Activated CD4-positive, alpha-beta memory T cell treated with anti-CD3 and anti-CD28 coated beads, Interleukin-2, amount 10 ng/mL, durations not matched to agents 7 days and 5 days (primary cell): ENCODE measurements at regions of chr11 and their contacts with region 1.

Region 1: DNA sequence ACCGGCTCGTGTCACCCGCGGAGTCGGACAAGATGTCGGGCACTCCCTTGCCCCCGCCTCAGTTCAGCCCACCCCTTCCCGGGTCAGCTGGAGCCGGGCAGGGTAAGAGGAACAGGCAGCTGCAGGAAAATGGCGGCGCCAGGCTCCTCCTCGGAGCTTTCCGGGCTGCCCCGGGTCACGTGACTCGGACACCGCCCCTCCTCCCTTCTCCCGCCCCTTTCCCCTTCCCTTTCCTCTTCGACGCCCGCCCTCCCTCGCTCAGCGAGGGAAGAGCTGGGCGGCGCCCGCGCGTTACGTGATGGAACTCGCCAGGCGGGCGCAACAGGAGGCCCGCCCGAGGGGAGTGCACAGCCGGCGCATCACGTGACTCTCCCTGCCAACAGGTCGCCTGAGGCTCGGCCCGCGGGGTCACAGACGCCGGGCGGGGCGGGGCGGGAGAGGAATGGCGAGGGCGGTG is at the start of gene PICALM:
- DNase-seq: peak; percentile 98
- H3K4me3 Mint-ChIP-seq: peak within 1 kb of the TSS; percentile 100
- H3K27ac Mint-ChIP-seq: peak within 1 kb of the TSS; percentile 88
- H3K4me1 Mint-ChIP-seq: peaks cover 26% of the 10 kb centered on the region
- H3K27me3 Mint-ChIP-seq: no peaks in the 10 kb centered on the region
- total RNA-seq, gene PICALM: 194 to 199 TPM

Region 2: DNA sequence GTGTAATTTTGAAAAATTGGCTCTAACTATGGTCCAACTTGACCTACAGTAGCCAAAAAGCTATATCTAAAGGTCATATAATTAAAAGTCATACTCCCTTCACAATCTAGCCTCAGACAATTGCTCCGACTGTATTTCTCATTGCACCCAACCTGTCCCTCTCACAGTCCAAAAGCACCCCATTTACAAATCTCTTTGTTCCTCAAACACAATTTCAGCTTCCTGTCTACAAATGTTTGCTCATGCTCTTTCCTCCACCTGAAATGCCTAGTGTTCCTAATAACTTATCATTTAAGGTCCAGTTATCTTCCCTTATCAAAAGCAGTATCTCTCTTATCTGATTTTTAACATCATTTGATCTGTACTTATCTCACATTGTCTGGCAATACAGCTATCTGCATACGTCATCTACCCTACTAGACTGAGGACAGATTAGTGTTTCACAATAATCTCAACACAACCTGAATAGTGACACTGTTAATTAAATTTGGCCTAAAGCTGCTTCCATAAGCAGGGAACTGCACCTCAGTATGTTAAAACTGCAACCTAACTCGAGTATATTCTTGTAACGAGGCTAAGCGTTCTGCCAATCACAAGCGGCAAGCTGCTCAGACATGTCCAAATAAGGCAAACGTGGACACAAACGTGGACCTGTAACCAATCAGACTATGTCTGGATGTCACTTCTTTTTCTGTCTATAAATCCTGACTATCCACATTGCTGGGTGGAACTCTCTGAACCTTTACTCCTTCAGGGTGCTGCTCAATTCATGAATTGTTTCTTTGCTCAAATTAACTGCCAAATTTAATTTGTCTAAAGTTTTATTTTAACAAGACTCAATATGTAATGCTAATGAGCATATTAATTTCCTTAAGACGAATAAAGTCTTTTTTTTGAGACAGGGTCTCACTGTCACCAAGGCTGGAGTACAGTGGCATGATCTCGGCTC is 16.0 kb before region 1 on chr11:
- CTCF ChIA-PET with region 1: interaction called, 8 read pairs
- POLR2A ChIA-PET with region 1: interaction called, 23 read pairs
- DNase-seq: no peak
- H3K4me3 Mint-ChIP-seq: no peak overlapping the region
- H3K27ac Mint-ChIP-seq: peak overlapping the region; percentile 1
- H3K4me1 Mint-ChIP-seq: peaks cover 86% of the 10 kb centered on the region
- H3K27me3 Mint-ChIP-seq: no peaks in the 10 kb centered on the region

Region 3: DNA sequence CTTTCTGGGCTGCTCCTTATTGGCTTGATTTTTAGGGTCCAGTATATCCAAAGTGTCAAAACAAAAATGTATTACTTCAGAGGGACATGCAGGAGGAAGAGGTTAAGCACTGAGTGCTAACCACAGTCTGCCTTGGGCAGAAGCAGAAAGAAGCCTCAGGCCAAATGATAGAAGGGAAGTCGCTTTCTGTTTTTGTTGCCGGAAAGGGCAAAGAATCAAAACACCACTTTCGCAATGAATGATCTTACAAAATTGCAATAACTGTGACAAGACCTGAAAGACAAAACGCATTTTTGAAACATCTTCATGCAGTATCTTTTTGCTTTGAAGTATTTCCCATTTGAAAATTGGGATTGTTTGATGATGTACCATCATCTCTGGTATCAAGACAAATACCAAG is 70.0 kb after region 1 on chr11:
- CTCF ChIA-PET with region 1: no interaction called
- POLR2A ChIA-PET with region 1: interaction called, 43 read pairs
- DNase-seq: peak; percentile 60
- H3K4me3 Mint-ChIP-seq: peak overlapping the region; percentile 44
- H3K27ac Mint-ChIP-seq: peak overlapping the region; percentile 94
- H3K4me1 Mint-ChIP-seq: peaks cover 68% of the 10 kb centered on the region
- H3K27me3 Mint-ChIP-seq: no peaks in the 10 kb centered on the region

Region 4: GRCh38 chr11:86182976-86183584 is 114.1 kb after region 1 on chr11:
- CTCF ChIA-PET with region 1: interaction called, 5 read pairs
- POLR2A ChIA-PET with region 1: interaction called, 23 read pairs
- DNase-seq: peak; percentile 76
- H3K4me3 Mint-ChIP-seq: no peak overlapping the region
- H3K27ac Mint-ChIP-seq: no peak overlapping the region
- H3K4me1 Mint-ChIP-seq: peaks cover 3% of the 10 kb centered on the region
- H3K27me3 Mint-ChIP-seq: no peaks in the 10 kb centered on the region

Region 5: DNA sequence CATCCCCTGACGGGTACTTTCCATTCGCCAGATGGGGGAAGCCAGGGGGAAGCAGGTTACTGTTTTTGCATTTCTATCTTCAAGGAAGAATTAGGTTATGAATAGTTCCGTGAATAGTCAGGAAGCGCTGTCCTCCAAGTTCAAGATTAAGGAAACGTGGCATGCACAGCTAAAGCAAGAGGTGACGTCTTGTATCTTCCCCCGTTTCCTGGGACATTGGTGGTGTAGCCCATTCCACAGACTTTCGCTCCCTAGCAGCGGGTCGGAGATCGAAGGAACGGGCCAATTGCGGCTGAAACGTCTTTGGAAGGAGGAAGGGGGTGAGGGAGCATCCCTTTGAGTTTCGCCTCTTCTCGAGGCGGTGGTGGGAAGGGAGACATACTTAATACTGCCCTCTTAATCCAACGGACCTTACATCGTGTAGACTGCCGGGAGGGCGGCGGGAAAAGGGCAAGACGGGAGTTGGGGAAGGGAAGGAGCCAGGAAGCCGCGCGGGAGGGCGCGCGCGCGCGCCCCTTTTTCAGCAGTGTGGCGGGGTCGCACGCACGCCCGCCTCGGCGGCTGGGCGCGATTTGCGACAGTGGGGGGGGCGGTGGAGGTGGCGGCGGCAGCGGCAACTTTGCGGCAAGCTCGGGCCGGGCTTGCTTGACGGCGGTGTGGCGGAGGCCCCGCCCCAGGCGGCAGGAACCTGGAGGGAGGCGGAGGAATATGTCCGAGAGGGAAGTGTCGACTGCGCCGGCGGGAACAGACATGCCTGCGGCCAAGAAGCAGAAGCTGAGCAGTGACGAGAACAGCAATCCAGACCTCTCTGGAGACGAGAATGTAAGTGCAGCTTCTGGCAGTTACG is 175.8 kb after region 1 on chr11 and contains the start of gene EED:
- CTCF ChIA-PET with region 1: interaction called, 8 read pairs
- POLR2A ChIA-PET with region 1: interaction called, 51 read pairs
- DNase-seq: peak; percentile 94
- H3K4me3 Mint-ChIP-seq: no peak within 1 kb of the TSS
- H3K27ac Mint-ChIP-seq: no peak within 1 kb of the TSS
- H3K4me1 Mint-ChIP-seq: peaks cover 41% of the 10 kb centered on the region
- H3K27me3 Mint-ChIP-seq: no peaks in the 10 kb centered on the region
- total RNA-seq, gene EED: 63.9 to 66.9 TPM

Region 6: DNA sequence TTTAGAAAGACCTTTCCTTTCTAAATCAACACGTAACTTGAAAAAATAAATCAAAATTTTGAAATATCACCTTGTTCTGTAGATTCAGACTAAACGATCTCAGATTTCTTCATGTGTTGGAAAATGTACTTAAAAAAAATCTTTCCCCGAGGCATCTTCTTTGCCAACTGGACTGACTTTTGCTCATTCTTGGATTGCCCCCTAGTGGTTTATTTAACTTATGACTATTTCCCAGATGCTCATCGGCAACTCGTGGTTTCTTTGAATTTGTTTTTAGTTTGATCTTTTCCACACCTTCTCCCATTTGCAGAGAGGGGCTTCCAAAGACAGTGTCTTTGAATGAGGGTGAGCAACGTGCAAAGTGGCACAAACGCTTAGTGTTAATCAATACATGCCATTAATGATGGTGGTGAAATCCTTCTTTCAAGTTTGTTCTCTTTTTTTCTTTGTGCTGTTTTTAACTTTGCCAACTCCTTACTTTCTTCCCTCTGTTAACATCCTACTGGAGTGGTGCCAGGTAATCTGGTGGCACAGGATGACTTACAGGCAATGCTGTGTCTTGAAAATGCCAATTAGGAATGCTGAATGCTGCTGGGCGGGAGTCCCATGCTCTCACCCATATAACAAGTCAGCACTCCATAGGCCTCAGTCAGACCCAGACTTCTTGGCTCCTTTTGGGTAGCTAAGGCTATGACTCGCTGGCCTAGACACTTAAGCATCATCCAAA is 749.6 kb after region 1 on chr11:
- CTCF ChIA-PET with region 1: no interaction called
- POLR2A ChIA-PET with region 1: no interaction called
- DNase-seq: no peak
- H3K4me3 Mint-ChIP-seq: no peak overlapping the region
- H3K27ac Mint-ChIP-seq: no peak overlapping the region
- H3K4me1 Mint-ChIP-seq: peaks cover 4% of the 10 kb centered on the region
- H3K27me3 Mint-ChIP-seq: peaks cover 35% of the 10 kb centered on the region